Activated CD4-positive, alpha-beta memory T cell treated with anti-CD3 and anti-CD28 coated beads for 36 hours (primary cell): ENCODE measurements at regions of chr12 and their contacts with region 1.

Region 1: DNA sequence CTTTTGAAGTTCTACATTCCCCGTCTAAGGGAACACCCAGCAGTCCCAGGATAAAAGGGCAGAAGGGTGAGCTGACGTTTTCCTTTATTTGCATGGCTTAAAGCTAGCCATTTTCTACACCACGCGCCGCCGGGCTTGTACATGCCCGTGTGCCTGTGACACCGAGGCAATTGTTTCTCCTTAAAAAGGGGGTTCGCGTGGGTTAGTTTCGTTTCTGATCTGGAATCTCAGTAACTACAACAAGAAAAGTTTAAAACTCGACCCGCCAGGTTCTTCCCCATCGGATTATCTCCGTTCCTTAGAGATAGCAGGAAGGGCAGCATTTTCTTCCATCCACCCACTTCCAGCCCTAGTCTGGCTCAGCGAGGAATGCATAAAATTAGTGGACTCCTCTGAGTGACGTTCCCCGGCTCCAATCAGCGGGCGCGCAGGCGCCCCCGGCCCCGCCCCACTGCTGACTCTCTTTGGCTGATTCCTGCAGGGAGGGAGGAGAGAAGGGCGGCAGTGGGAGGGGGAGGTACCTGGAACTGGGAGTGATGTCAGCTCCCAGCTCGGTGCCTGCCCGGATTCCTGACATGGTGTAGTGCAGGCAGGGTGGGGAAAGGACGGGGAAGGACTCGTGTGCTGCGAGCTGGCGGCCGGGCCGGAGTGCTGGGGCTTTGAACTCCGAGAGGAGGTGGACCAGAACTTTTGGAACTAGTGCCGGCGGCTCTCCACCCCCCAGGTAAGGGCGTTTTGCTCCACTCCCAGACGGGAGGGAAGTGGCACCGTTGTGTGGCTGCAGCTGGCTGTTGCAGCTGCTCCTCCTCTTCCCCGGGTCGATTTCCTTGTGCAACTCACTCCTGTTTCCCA is at the start of gene PPFIBP1:
- DNase-seq: peak; percentile 99
- H3K4me3 Mint-ChIP-seq: peak within 1 kb of the TSS; percentile 93
- H3K27ac Mint-ChIP-seq: peak within 1 kb of the TSS; percentile 79
- H3K4me1 Mint-ChIP-seq: peaks cover 18% of the 10 kb centered on the region
- H3K27me3 Mint-ChIP-seq: peaks cover 8% of the 10 kb centered on the region
- total RNA-seq, gene PPFIBP1: 14.1 to 14.9 TPM

Region 2: DNA sequence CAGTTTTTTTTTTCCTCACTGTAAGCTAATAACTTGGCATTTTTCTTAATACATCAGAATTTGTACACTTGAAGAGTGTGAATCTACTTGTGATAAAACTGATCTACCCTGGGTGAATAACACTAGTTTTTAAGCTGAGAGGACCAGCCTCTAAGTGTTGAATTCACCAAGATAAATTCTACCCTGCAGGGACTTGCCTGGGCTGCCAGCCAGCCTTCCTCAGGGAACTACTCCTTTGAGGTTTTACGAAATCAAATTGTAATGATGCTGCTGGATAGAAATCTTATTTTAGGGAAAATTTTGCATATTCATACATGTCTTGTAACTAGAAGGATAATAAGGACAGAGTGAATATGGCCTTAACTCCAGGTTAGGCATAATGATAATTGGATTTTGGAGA is 499.6 kb before region 1 on chr12:
- CTCF ChIA-PET with region 1: no interaction called
- POLR2A ChIA-PET with region 1: no interaction called
- intact Hi-C with region 1: loop called (anchors 10 kb)
- DNase-seq: no peak
- H3K4me3 Mint-ChIP-seq: no peak overlapping the region
- H3K27ac Mint-ChIP-seq: no peak overlapping the region
- H3K4me1 Mint-ChIP-seq: peaks cover 40% of the 10 kb centered on the region
- H3K27me3 Mint-ChIP-seq: no peaks in the 10 kb centered on the region

Region 3: GRCh38 chr12:27498149-27498548 is 25.7 kb before region 1 on chr12:
- CTCF ChIA-PET with region 1: no interaction called
- POLR2A ChIA-PET with region 1: no interaction called
- intact Hi-C with region 1: loop called (anchors 1 kb)
- DNase-seq: no peak
- H3K4me3 Mint-ChIP-seq: no peak overlapping the region
- H3K27ac Mint-ChIP-seq: no peak overlapping the region
- H3K4me1 Mint-ChIP-seq: peaks cover 23% of the 10 kb centered on the region
- H3K27me3 Mint-ChIP-seq: peaks cover 31% of the 10 kb centered on the region

Region 4: GRCh38 chr12:27534060-27534764 is 10.3 kb after region 1 on chr12:
- CTCF ChIA-PET with region 1: no interaction called
- POLR2A ChIA-PET with region 1: interaction called, 4 read pairs
- intact Hi-C with region 1: loop called (anchors 1 kb)
- DNase-seq: peak; percentile 41
- H3K4me3 Mint-ChIP-seq: no peak overlapping the region
- H3K27ac Mint-ChIP-seq: peak overlapping the region; percentile 47
- H3K4me1 Mint-ChIP-seq: peaks cover 32% of the 10 kb centered on the region
- H3K27me3 Mint-ChIP-seq: peaks cover 2% of the 10 kb centered on the region

Region 5: DNA sequence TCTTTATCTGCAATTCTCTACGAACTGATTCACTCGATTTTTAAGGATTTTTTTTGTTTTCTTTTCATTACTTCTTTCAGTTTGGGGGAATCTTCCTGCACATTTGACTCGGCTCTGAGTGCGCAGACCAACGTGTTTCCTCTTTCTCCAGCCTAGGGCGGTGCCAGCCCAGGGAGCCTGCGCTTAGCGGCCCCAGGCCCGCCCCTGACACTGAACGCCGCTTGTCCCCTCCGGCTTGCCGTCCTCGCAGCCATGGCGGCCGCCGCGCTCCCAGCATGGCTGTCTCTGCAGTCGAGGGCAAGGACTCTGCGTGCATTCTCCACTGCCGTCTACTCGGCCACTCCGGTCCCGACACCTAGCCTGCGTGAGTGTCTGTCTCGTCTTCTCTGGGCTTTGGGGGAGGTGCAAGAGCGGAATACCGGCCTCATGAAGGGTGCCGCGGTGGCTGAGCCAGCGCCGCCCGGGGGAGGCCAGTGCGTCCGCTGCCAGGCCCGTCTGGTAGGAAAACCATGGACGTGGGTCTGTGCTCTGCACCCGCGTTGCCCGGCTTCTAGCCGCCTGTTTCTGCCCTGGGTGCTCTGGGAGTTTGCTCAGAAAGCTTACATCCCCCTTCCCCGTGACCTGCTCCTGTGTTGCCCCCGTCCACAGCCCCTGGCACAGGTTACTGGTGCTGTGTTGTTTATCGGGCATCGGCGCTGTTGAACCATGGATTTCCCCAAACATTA is 186.9 kb after region 1 on chr12 and contains the start of gene MRPS35:
- CTCF ChIA-PET with region 1: interaction called, 3 read pairs
- POLR2A ChIA-PET with region 1: no interaction called
- intact Hi-C with region 1: loop called (anchors 1 kb)
- DNase-seq: peak; percentile 95
- H3K4me3 Mint-ChIP-seq: peak within 1 kb of the TSS; percentile 93
- H3K27ac Mint-ChIP-seq: peak within 1 kb of the TSS; percentile 90
- H3K4me1 Mint-ChIP-seq: peaks cover 17% of the 10 kb centered on the region
- H3K27me3 Mint-ChIP-seq: peaks cover 3% of the 10 kb centered on the region
- total RNA-seq, gene MRPS35: 49.2 to 50.2 TPM